ENCODE measurements at regions of chr16 and their contacts with region 1.

Region 1: DNA sequence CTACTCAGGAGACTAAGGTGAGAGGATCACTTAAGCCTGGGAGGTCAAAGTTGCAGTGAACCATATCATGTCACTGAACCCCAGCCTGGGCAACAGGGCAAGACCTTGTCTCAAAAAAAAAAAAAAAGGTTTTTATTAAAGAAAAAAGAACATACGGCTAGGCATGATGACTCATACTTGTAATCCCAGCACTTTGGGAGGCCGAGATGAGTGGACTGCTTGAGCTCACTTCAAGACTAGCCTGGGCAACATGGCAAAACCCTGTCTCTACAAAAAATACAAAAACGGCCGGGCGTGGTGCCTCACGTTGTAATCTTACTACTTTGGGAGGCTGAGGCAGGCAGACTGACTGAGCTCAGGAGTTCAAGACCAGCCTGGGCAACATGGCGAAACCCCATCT is 38.4 kb downstream of the RANBP10 start:
- DNase-seq: no peak
- ATAC-seq: no peak
- H3K4me3 ChIP-seq: no peak overlapping the region
- H3K4me3 Mint-ChIP-seq: no peak overlapping the region
- H3K27ac ChIP-seq: no peak overlapping the region
- H3K27ac Mint-ChIP-seq: no peak overlapping the region
- H3K4me1 ChIP-seq: no peaks in the 10 kb centered on the region
- H3K4me1 Mint-ChIP-seq: peaks cover 5% of the 10 kb centered on the region
- H3K27me3 ChIP-seq: no peaks in the 10 kb centered on the region
- H3K27me3 Mint-ChIP-seq: no peaks in the 10 kb centered on the region
- CTCF ChIP-seq: no peak

Region 2: DNA sequence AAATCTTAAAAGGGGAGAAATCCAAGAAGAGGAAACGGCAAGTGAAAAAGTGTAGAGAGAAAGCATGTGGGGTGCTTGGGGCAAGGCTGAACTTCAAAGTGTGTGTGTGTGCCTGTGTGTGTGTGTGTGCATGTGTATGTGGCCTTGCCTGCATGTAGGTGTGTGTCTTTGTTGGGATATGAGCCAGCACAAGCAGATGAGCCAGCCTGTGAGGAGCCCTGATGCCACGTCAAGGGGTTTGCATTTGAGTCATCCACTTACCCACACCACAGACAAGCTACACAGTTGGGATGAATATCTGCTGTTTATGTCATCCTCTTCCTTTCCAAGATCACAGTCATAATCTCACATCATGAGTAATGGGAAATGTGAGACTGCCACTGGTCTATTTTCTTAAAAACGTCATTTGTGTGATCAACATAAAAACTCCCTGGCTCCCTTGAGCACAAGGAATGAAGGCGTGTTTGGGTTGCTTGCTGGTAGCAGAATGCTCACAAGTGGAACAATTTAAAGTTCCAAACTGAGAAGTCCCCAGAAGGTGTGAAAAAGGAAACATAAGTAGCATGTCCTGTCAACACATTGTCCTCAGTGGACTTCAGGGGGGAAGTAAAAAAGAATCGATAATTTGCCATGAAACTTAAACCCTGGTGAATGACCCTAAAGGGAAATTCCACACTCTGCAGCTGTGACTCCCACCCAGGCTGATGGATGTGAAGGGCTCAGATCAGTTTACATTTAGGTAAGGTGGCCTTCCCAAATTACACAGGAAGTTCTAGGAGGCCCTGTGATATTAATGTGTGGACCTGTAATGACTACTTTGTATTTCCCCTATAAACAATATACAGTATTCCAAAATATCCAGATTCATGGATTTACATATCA is 456.1 kb before region 1 on chr16:
- CTCF ChIA-PET with region 1: no interaction called
- POLR2A ChIA-PET with region 1: no interaction called
- intact Hi-C with region 1: no loop called
- DNase-seq: peak in 3 of 9 experiments; percentile 21 to 48 (median 38)
- ATAC-seq: peak; percentile 72
- H3K4me3 ChIP-seq: no peak overlapping the region
- H3K4me3 Mint-ChIP-seq: no peak overlapping the region
- H3K27ac ChIP-seq: no peak overlapping the region
- H3K27ac Mint-ChIP-seq: no peak overlapping the region
- H3K4me1 ChIP-seq: no peaks in the 10 kb centered on the region
- H3K4me1 Mint-ChIP-seq: no peaks in the 10 kb centered on the region
- H3K27me3 ChIP-seq: peaks cover 0 to 5% of the 10 kb centered on the region in 2 experiments
- H3K27me3 Mint-ChIP-seq: no peaks in the 10 kb centered on the region
- CTCF ChIP-seq: no peak

Region 3: GRCh38 chr16:68605746-68606145 is 837.8 kb after region 1 on chr16:
- CTCF ChIA-PET with region 1: no interaction called
- POLR2A ChIA-PET with region 1: no interaction called
- intact Hi-C with region 1: loop called in 1 of 2 experiments (anchors 10 kb)
- DNase-seq: no peak
- ATAC-seq: no peak
- H3K4me3 ChIP-seq: no peak overlapping the region
- H3K4me3 Mint-ChIP-seq: no peak overlapping the region
- H3K27ac ChIP-seq: no peak overlapping the region
- H3K27ac Mint-ChIP-seq: no peak overlapping the region
- H3K4me1 ChIP-seq: no peaks in the 10 kb centered on the region
- H3K4me1 Mint-ChIP-seq: no peaks in the 10 kb centered on the region
- H3K27me3 ChIP-seq: no peaks in the 10 kb centered on the region
- H3K27me3 Mint-ChIP-seq: no peaks in the 10 kb centered on the region
- CTCF ChIP-seq: no peak

Measured in CD8-positive, alpha-beta T cell (primary cell).